Heart left ventricle (tissue), 16 donors: ENCODE measurements at regions of chr10 and their contacts with region 1.

Region 1: DNA sequence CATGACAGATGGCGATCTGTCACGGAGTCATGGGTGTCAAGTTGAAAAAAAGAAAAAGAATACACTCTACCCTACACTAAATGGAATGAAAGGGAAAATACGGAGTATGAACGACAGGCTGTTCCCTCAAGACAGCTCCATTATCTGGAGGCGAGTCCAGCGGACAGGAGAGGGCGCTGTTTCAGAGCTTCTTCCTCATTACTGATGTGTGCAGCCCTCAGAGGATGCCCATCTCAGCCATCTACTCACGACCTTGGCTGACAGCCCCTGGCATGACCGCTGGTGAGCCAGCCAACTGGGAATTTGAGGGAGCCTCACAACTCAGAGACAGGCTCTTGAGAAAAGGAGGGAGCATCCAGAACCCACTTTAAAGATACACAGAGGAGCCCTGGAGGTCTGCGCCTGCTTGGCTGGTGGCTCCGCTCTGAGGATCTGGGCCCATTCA is 49.6 kb upstream of the SMNDC1 start:
- DNase-seq: peak; percentile 76 to 85 (median 78)
- ATAC-seq: peak; percentile 62 to 91 (median 82)
- H3K4me3 ChIP-seq: no peak overlapping the region
- H3K27ac ChIP-seq: no peak overlapping the region
- H3K4me1 ChIP-seq: peaks cover 0 to 45% (median 8%) of the 10 kb centered on the region in 12 donors
- H3K27me3 ChIP-seq: peaks cover 0 to 3% (median 0%) of the 10 kb centered on the region in 9 donors
- CTCF ChIP-seq: peak; percentile 54 to 85 (median 73)
- POLR2A ChIP-seq: no peak

Region 2: GRCh38 chr10:109934958-109935706 is 419.2 kb before region 1 on chr10:
- intact Hi-C with region 1: no loop called
- DNase-seq: peak in 4 of 5 donors; percentile 41 to 54 (median 45)
- ATAC-seq: peak; percentile 69 to 93 (median 91)
- H3K4me3 ChIP-seq: no peak overlapping the region
- H3K27ac ChIP-seq: peak overlapping the region in 11 of 12 donors; percentile 25 to 62 (median 39)
- H3K4me1 ChIP-seq: peaks cover 0 to 33% (median 17%) of the 10 kb centered on the region in 12 donors
- H3K27me3 ChIP-seq: no peaks in the 10 kb centered on the region
- CTCF ChIP-seq: no peak
- POLR2A ChIP-seq: no peak

Region 3: DNA sequence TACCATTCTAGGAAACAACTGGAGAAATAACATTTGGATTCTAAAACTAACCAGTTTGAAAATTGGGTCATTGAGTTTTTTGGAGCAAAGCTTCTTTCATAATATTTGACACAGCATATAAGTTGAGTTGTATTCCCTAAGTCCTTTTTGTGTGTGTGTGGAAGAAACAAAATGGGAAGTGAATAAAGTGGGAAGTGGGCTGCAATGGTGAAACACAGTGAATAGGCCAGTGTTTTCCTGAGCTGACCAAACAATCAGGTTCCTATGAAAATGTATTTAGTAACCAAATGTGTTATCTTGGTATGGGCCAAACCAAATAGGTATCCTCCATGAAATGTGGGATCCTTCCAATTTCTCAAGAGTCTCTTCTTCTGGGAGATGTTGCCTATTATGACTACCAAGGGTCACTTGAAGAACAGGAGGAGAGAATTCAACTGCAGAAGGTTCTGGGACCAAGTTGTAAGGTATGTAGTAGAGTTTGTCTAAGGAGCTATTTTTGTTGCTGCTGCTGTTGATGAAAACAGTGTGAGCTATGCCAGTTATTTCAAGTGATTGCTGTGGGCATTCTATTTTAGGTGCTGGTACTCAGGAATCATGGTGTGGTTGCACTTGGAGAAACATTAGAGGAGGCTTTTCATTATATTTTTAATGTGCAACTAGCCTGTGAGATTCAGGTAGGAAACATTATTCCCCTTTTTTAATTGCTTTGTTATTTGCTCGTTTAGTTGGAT is 235.3 kb before region 1 on chr10:
- intact Hi-C with region 1: no loop called
- DNase-seq: no peak
- ATAC-seq: peak; percentile 90 to 95 (median 91)
- H3K4me3 ChIP-seq: peak overlapping the region in 1 of 12 donors; percentile 21
- H3K27ac ChIP-seq: peak overlapping the region; percentile 38 to 91 (median 70)
- H3K4me1 ChIP-seq: peaks cover 3 to 16% (median 6%) of the 10 kb centered on the region in 12 donors
- H3K27me3 ChIP-seq: no peaks in the 10 kb centered on the region
- CTCF ChIP-seq: no peak
- POLR2A ChIP-seq: no peak

Region 4: GRCh38 chr10:110260746-110261477 is 93.4 kb before region 1 on chr10:
- intact Hi-C with region 1: no loop called
- DNase-seq: no peak
- ATAC-seq: peak; percentile 59 to 88 (median 83)
- H3K4me3 ChIP-seq: no peak overlapping the region
- H3K27ac ChIP-seq: peak overlapping the region; percentile 32 to 68 (median 58)
- H3K4me1 ChIP-seq: peaks cover 0 to 71% (median 39%) of the 10 kb centered on the region in 12 donors
- H3K27me3 ChIP-seq: no peaks in the 10 kb centered on the region
- CTCF ChIP-seq: no peak
- POLR2A ChIP-seq: no peak

Region 5: GRCh38 chr10:110311357-110311949 is 42.9 kb before region 1 on chr10:
- intact Hi-C with region 1: loop called in 1 of 10 experiments (anchors 5 kb)
- DNase-seq: peak in 3 of 5 donors; percentile 32 to 56 (median 43)
- ATAC-seq: peak in 3 of 4 donors; percentile 64 to 85 (median 79)
- H3K4me3 ChIP-seq: no peak overlapping the region
- H3K27ac ChIP-seq: peak overlapping the region in 1 of 12 donors; percentile 38
- H3K4me1 ChIP-seq: peaks cover 0 to 9% (median 4%) of the 10 kb centered on the region in 12 donors
- H3K27me3 ChIP-seq: peaks cover 0 to 6% (median 0%) of the 10 kb centered on the region in 9 donors
- CTCF ChIP-seq: peak; percentile 39 to 78 (median 68)
- POLR2A ChIP-seq: no peak

Region 6: GRCh38 chr10:110420401-110421193 is 66.3 kb after region 1 on chr10:
- intact Hi-C with region 1: loop called in 1 of 10 experiments (anchors 5 kb)
- DNase-seq: peak in 2 of 5 donors; percentile 53 to 60
- ATAC-seq: peak in 1 of 4 donors; percentile 13
- H3K4me3 ChIP-seq: no peak overlapping the region
- H3K27ac ChIP-seq: no peak overlapping the region
- H3K4me1 ChIP-seq: peaks cover 0 to 46% (median 13%) of the 10 kb centered on the region in 12 donors
- H3K27me3 ChIP-seq: no peaks in the 10 kb centered on the region
- CTCF ChIP-seq: no peak
- POLR2A ChIP-seq: no peak

Region 7: DNA sequence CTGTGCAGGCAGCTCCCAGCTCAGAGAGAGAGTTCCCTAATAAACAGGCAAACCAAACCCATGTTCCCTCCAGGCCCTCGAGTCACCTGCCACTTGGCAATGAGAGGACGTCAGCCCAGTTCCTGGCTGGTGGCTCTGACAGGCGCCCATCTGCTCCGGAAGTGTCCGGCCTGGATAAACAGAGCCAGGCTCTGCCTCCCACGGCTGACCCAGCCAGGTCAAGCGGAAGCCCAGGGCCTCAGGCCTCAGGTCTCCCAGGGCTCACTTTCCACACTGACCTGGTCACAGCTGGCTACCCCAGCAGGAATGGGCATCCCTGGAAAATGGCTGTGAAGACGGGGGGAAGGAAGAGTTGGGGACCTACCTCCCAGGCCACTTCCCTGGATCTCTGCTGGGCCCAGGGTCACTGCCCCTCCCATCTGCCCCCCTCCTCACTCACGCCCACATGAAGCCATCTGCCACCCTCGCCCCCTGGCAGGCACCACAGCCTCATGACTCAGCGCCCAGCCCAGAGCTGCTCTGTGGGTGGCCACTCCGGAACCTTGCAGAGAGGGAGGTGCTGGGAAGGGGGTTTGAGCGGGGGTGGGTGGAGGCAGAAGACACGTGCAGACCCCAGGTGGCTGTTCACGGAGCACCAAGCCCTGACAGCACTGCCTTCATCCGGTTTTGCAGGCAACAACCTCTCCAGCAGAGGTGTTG is 105.9 kb after region 1 on chr10:
- intact Hi-C with region 1: loop called in 1 of 10 experiments (anchors 5 kb)
- DNase-seq: peak in 3 of 5 donors; percentile 35 to 49 (median 36)
- ATAC-seq: peak; percentile 20 to 53 (median 33)
- H3K4me3 ChIP-seq: no peak overlapping the region
- H3K27ac ChIP-seq: peak overlapping the region in 5 of 12 donors; percentile 10 to 77 (median 40)
- H3K4me1 ChIP-seq: peaks cover 0 to 47% (median 14%) of the 10 kb centered on the region in 12 donors
- H3K27me3 ChIP-seq: no peaks in the 10 kb centered on the region
- CTCF ChIP-seq: no peak
- POLR2A ChIP-seq: no peak

Region 8: GRCh38 chr10:110530131-110530831 is 175.9 kb after region 1 on chr10:
- intact Hi-C with region 1: loop called in 4 of 10 experiments (anchors 5 kb)
- DNase-seq: peak; percentile 44 to 74 (median 63)
- ATAC-seq: peak; percentile 58 to 89 (median 88)
- H3K4me3 ChIP-seq: peak overlapping the region in 10 of 12 donors; percentile 3 to 49 (median 32)
- H3K27ac ChIP-seq: no peak overlapping the region
- H3K4me1 ChIP-seq: peaks cover 0 to 44% (median 5%) of the 10 kb centered on the region in 12 donors
- H3K27me3 ChIP-seq: peaks cover 0 to 4% (median 0%) of the 10 kb centered on the region in 9 donors
- CTCF ChIP-seq: no peak
- POLR2A ChIP-seq: no peak

Region 9: DNA sequence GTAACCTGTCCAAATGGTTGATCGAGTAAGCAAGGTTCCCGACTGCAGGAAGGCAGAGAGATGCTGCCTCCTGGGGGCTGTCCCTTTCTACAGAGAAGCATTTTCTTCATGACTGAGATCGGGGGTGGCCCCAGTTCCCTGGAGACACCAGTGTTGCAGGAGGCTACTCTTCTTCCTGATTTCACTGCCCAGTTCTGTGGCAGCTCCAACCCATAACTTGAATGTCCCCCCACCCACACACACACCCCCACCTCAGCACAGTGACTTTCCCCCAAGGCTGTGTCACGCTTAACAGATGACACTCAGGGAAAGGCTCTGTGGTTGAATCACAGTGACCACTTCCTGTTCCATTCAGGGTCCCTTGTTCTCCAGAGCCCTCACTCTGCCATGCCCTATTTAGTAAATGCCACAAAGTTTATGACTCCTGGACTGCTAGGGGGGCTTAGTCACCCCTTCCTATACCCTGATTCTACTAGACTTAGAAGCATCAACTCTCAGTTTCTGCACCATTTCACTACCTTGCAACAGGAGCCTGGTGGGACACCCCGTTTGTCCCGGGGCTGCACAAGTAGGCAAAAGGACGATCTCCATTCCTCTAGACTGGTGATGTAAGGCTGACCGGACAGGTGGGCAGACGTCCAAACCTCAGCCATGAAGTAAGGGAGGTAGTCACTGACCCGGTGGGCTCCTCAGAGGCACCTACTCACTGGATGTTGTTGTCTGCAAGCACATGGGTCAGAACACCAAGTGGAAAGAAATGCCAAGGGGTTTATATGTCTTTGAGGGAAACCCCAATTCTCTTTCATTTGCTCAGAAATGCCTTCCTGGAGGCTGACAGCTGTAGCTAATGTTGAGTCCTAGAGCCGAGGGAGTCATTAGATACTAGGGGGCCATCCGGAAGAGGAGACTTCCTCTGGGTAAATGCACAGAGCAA is 181.9 kb after region 1 on chr10:
- intact Hi-C with region 1: loop called in 6 of 10 experiments (anchors 2 to 5 kb)
- DNase-seq: peak; percentile 36 to 58 (median 44)
- ATAC-seq: peak in 3 of 4 donors; percentile 68 to 83 (median 83)
- H3K4me3 ChIP-seq: no peak overlapping the region
- H3K27ac ChIP-seq: no peak overlapping the region
- H3K4me1 ChIP-seq: peaks cover 0 to 25% (median 0%) of the 10 kb centered on the region in 12 donors
- H3K27me3 ChIP-seq: no peaks in the 10 kb centered on the region
- CTCF ChIP-seq: peak; percentile 14 to 64 (median 54)
- POLR2A ChIP-seq: no peak

Region 10: GRCh38 chr10:110547139-110547761 is 192.9 kb after region 1 on chr10:
- intact Hi-C with region 1: loop called in 4 of 10 experiments (anchors 1 to 5 kb)
- DNase-seq: no peak
- ATAC-seq: peak; percentile 32 to 63 (median 54)
- H3K4me3 ChIP-seq: no peak overlapping the region
- H3K27ac ChIP-seq: peak overlapping the region in 1 of 12 donors; percentile 75
- H3K4me1 ChIP-seq: peaks cover 0 to 12% (median 1%) of the 10 kb centered on the region in 12 donors
- H3K27me3 ChIP-seq: peaks cover 0 to 8% (median 0%) of the 10 kb centered on the region in 9 donors
- CTCF ChIP-seq: peak; percentile 69 to 88 (median 81)
- POLR2A ChIP-seq: no peak